Vagina (tissue), 2 donors: ENCODE measurements at regions of chr12 and their contacts with region 1.

Region 1: DNA sequence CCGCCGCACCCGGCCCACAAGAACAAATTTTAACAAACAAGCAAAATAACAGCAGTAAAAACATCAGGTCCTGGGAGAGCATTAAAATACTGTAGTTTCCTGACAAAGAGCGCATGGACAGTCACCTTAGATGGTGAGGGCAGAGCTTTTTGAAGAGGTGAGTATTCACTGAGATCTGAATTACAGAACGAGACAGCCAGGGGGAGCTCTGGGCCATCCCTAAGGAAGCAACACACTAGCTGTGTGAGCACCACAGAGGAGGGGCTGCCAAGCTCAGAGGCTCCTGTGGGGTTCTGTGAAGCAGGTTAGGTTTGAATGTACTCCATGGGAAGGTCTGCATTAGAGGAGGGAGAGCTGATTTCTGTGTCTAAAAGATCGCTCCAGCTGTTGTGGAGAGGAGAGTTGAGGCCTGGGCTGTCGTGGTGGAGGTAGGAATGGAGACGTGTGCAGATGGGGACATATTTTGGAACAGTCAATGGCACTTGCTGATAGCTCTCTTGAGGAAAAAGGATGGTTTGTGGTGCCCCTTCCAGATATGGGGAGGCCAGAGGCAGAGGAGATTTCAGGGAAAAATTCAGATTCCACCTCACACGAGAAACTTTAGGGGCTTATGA is 72.9 kb downstream of the TRAFD1 start:
- DNase-seq: no peak
- H3K4me3 ChIP-seq: no peak overlapping the region
- H3K27ac ChIP-seq: no peak overlapping the region
- H3K4me1 ChIP-seq: no peaks in the 10 kb centered on the region
- H3K27me3 ChIP-seq: no peaks in the 10 kb centered on the region
- CTCF ChIP-seq: peak; percentile 20 to 46 (median 37)
- POLR2A ChIP-seq: no peak

Region 2: GRCh38 chr12:112382232-112382796 is 184.1 kb after region 1 on chr12 and contains the start of gene HECTD4:
- intact Hi-C with region 1: loop called (anchors 10 kb)
- DNase-seq: no peak
- H3K4me3 ChIP-seq: peak within 1 kb of the TSS; percentile 75 to 77
- H3K27ac ChIP-seq: peak within 1 kb of the TSS; percentile 77
- H3K4me1 ChIP-seq: peaks cover 32% of the 10 kb centered on the region
- H3K27me3 ChIP-seq: no peaks in the 10 kb centered on the region
- CTCF ChIP-seq: no peak
- POLR2A ChIP-seq: peak; percentile 28 to 62
- total RNA-seq, gene HECTD4: 79.6 TPM

Region 3: DNA sequence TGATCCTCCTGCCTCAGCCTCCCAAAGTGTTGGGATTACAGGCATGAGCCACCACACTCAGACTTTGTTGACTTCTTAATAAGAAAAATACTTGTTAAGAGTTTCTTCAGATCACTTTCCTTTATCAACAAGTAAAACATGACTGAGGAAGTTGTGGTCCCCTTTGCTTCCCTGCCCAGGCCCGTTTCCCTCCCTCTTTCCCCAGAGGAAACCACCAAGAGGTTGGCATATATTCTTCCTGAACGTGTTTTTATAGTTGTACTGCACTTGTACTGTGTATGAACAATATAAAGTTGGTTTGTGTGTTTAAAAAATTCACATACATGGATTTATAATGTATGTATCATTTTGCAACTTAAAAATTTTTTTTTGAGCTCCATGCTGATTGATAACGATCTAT is 248.9 kb after region 1 on chr12:
- intact Hi-C with region 1: no loop called
- DNase-seq: no peak
- H3K4me3 ChIP-seq: no peak overlapping the region
- H3K27ac ChIP-seq: no peak overlapping the region
- H3K4me1 ChIP-seq: no peaks in the 10 kb centered on the region
- H3K27me3 ChIP-seq: no peaks in the 10 kb centered on the region
- CTCF ChIP-seq: no peak
- POLR2A ChIP-seq: no peak